ENCODE measurements at regions of chr1 and their contacts with region 1.

Region 1: GRCh38 chr1:209747580-209748262 is 8.1 kb upstream of the TRAF3IP3 start:
- DNase-seq: peak; percentile 96
- H3K4me3 Mint-ChIP-seq: peak overlapping the region; percentile 62
- H3K27ac Mint-ChIP-seq: peak overlapping the region; percentile 87
- H3K4me1 Mint-ChIP-seq: peaks cover 79% of the 10 kb centered on the region
- H3K27me3 Mint-ChIP-seq: no peaks in the 10 kb centered on the region

Region 2: DNA sequence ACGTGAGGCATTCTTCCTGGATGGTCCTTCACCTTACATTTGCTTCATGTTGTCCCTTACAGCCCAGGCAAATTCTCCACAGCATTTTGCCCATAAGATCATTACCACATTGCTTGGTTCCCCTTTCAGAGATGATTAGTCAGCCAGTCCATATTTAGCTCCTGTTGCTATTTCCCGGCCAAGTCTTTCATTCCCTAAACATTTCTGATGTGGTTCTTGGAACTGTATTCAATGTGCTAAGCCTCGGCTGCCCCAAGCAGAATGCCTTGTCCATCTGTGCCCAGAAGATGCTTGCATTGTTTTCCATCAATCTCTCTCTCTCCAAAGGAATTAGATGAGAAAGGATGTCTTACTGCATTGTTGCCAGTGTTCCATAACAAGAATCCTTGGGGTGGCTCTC is 585.1 kb before region 1 on chr1:
- CTCF ChIA-PET with region 1: no interaction called
- POLR2A ChIA-PET with region 1: no interaction called
- intact Hi-C with region 1: no loop called
- DNase-seq: no peak
- H3K4me3 Mint-ChIP-seq: no peak overlapping the region
- H3K27ac Mint-ChIP-seq: no peak overlapping the region
- H3K4me1 Mint-ChIP-seq: no peaks in the 10 kb centered on the region
- H3K27me3 Mint-ChIP-seq: peaks cover 3% of the 10 kb centered on the region

Region 3: GRCh38 chr1:209601809-209602657 is 145.7 kb before region 1 on chr1:
- CTCF ChIA-PET with region 1: interaction called, 8 read pairs
- POLR2A ChIA-PET with region 1: interaction called, 3 read pairs
- intact Hi-C with region 1: loop called (anchors 2 kb)
- DNase-seq: peak; percentile 67
- H3K4me3 Mint-ChIP-seq: no peak overlapping the region
- H3K27ac Mint-ChIP-seq: no peak overlapping the region
- H3K4me1 Mint-ChIP-seq: peaks cover 3% of the 10 kb centered on the region
- H3K27me3 Mint-ChIP-seq: peaks cover 3% of the 10 kb centered on the region

Region 4: DNA sequence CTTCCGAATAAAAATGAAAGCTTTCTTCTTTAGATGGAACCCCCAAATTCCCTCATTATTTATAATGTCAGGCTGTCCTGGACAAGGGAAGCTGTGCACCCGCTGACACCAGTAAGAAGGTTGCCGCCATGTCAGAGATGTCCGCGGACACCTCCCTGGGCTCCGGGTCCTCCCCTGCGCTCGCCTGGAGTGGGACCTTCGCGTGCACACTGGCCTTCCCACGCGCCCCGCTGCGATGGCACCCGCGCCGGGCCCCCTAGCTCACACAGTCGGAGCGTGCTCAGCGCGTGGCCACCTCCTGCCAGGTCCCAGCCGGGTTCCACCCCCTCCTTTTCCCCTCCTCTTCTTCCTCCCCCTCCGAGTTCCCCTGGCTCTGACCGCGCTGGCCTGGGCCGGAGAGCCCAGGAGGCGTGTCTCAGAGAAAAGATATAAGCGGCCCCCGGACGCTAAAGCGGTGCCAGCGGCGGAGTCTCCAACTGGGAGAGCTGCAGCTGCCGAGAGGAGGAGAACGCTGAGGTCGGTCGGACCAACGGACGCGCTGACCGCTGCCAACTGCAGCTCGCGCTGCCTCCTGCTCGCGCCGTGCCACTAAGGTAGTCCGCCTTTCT is 72.7 kb before region 1 on chr1 and contains the start of gene G0S2:
- CTCF ChIA-PET with region 1: interaction called, 10 read pairs
- POLR2A ChIA-PET with region 1: interaction called, 6 read pairs
- intact Hi-C with region 1: loop called (anchors 1 kb)
- DNase-seq: peak; percentile 66
- H3K4me3 Mint-ChIP-seq: peak within 1 kb of the TSS; percentile 76
- H3K27ac Mint-ChIP-seq: peak within 1 kb of the TSS; percentile 68
- H3K4me1 Mint-ChIP-seq: peaks cover 68% of the 10 kb centered on the region
- H3K27me3 Mint-ChIP-seq: peaks cover 22% of the 10 kb centered on the region
- total RNA-seq, gene G0S2: 92.7 to 93.1 TPM

Region 5: DNA sequence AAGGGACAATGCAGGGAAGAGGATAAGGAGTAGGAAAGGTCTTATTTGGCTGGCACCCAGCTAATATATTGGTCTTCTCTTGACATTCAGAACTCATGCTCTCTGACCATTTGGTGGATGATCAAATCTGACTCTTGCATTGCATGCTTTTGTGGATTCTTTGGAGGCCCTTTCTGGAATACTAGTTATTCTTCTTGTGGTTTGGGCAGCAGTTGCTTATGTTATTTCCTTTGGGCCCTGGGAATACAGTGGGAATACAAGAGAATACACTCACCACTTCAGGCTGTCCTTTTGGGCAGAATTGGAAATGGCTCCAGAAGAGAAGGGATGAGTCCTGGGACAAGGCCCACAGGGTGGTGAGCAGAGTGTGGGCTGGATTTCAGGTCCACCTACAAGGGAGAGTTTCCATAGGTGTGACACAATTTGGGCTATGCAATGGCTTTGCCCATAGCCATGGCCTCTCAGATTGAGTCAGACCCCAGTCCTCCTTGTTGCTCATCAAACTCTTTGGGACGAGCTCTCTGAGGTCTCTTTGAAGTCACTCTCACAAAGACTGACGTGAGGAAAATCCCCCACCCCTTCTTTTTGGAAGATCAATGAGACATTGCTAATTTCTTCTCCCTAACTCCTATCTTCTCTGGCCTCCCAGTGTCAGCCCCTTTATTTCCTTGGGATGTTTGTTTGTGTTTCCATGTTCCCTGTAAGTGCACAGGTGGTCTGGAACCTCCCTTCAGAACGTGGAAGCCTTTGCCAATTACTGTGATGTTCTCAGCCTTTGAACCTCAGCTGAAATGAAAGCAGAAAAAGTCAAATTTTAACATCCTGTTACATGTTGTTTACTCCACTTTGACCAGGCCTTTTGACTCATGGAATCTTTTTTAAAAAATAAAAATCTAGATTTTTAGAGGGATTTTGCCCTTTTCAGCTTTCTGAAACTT is 23.7 kb before region 1 on chr1:
- CTCF ChIA-PET with region 1: interaction called, 22 read pairs
- POLR2A ChIA-PET with region 1: interaction called, 9 read pairs
- intact Hi-C with region 1: loop called (anchors 1 kb)
- DNase-seq: peak; percentile 79
- H3K4me3 Mint-ChIP-seq: peak overlapping the region; percentile 54
- H3K27ac Mint-ChIP-seq: peak overlapping the region; percentile 96
- H3K4me1 Mint-ChIP-seq: peaks cover 74% of the 10 kb centered on the region
- H3K27me3 Mint-ChIP-seq: no peaks in the 10 kb centered on the region

Region 6: GRCh38 chr1:209784265-209785169 is 36.8 kb after region 1 on chr1 and contains the start of gene C1orf74:
- CTCF ChIA-PET with region 1: interaction called, 12 read pairs
- POLR2A ChIA-PET with region 1: interaction called, 3 read pairs
- intact Hi-C with region 1: loop called (anchors 1 kb)
- DNase-seq: peak; percentile 100
- H3K4me3 Mint-ChIP-seq: peak within 1 kb of the TSS; percentile 93
- H3K27ac Mint-ChIP-seq: peak within 1 kb of the TSS; percentile 93
- H3K4me1 Mint-ChIP-seq: peaks cover 39% of the 10 kb centered on the region
- H3K27me3 Mint-ChIP-seq: peaks cover 3% of the 10 kb centered on the region
- total RNA-seq, gene C1orf74: 3.5 to 3.9 TPM

Region 7: GRCh38 chr1:210536254-210536961 is 788.7 kb after region 1 on chr1:
- CTCF ChIA-PET with region 1: no interaction called
- POLR2A ChIA-PET with region 1: no interaction called
- intact Hi-C with region 1: no loop called
- DNase-seq: no peak
- H3K4me3 Mint-ChIP-seq: no peak overlapping the region
- H3K27ac Mint-ChIP-seq: no peak overlapping the region
- H3K4me1 Mint-ChIP-seq: no peaks in the 10 kb centered on the region
- H3K27me3 Mint-ChIP-seq: no peaks in the 10 kb centered on the region